Activated CD4-positive, alpha-beta memory T cell treated with anti-CD3 and anti-CD28 coated beads, Interleukin-2, amount 10 ng/mL, durations not matched to agents 7 days and 5 days (primary cell): ENCODE measurements at regions of chr11 and their contacts with region 1.

Region 1: GRCh38 chr11:126303623-126304456 is at the start of gene DCPS:
- DNase-seq: peak; percentile 90
- H3K4me3 Mint-ChIP-seq: peak within 1 kb of the TSS; percentile 77
- H3K27ac Mint-ChIP-seq: peak within 1 kb of the TSS; percentile 75
- H3K4me1 Mint-ChIP-seq: peaks cover 30% of the 10 kb centered on the region
- H3K27me3 Mint-ChIP-seq: no peaks in the 10 kb centered on the region
- total RNA-seq, gene DCPS: 34.5 to 35.8 TPM

Region 2: DNA sequence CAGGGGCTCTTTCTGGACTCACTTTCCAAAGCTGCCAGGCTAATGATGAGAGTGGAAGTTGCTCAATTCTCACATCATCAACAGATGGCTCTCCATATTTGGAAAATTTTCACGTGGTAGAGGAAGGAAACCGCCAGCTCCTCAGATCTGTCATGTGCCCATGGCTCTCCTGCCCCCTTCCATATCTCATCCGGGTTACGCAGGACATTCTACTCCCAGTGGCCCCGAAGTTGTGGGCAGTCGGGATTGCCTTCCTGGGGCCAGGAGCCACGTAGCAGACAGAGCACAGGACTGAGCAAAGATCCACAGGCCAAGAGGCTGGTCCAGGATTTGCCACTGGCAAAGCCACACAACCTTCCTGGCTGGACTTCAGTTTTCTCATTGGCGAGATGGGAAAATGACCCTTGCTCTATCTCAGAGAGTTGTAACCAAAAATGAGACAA is 131.2 kb before region 1 on chr11:
- CTCF ChIA-PET with region 1: no interaction called
- POLR2A ChIA-PET with region 1: no interaction called
- DNase-seq: no peak
- H3K4me3 Mint-ChIP-seq: no peak overlapping the region
- H3K27ac Mint-ChIP-seq: no peak overlapping the region
- H3K4me1 Mint-ChIP-seq: peaks cover 1% of the 10 kb centered on the region
- H3K27me3 Mint-ChIP-seq: peaks cover 9% of the 10 kb centered on the region

Region 3: DNA sequence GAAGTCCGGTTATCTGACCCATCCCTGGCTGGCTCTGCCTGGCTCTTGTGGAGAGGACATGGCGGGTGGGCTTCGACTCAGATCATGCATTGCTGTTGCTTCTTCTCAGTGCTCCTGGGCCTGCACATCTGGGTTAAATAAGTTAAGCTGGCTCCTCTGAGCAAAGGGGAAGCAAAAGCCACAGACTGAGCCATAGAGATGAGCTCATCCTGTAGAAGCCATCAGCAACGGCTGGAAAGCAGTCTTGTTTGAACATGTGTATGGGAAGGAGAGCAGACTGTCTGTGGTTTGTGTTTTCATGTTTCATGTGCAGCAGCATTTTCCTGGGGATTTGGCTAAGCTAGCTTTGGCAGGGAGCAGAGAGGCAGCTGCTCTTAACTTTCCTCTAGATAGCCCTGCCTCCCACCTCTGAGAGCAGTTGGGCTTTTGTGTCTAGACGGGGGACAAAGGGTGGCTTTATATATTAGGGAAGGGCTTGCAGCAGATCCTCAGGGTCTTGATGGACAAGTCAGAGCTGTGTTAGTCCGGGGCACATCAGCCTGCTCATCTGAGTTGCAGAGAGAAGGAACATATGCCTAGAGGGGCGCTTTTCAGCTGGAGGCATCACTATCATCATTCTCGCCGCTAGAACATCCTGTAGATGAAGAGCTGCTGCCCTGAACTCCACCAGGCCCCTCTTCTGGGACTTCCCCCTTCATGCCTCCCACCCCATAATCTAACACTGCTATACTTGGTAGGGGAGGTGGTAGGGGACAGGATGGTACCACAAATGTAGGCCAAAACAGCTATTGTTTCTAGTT is 14.9 kb after region 1 on chr11:
- CTCF ChIA-PET with region 1: interaction called, 9 read pairs
- POLR2A ChIA-PET with region 1: interaction called, 23 read pairs
- DNase-seq: peak; percentile 44
- H3K4me3 Mint-ChIP-seq: no peak overlapping the region
- H3K27ac Mint-ChIP-seq: peak overlapping the region; percentile 78
- H3K4me1 Mint-ChIP-seq: peaks cover 33% of the 10 kb centered on the region
- H3K27me3 Mint-ChIP-seq: no peaks in the 10 kb centered on the region

Region 4: GRCh38 chr11:126607374-126607773 is 303.5 kb after region 1 on chr11:
- CTCF ChIA-PET with region 1: no interaction called
- POLR2A ChIA-PET with region 1: no interaction called
- DNase-seq: no peak
- H3K4me3 Mint-ChIP-seq: no peak overlapping the region
- H3K27ac Mint-ChIP-seq: no peak overlapping the region
- H3K4me1 Mint-ChIP-seq: no peaks in the 10 kb centered on the region
- H3K27me3 Mint-ChIP-seq: no peaks in the 10 kb centered on the region